ENCODE measurements at regions of chr14 and their contacts with region 1.

Region 1: DNA sequence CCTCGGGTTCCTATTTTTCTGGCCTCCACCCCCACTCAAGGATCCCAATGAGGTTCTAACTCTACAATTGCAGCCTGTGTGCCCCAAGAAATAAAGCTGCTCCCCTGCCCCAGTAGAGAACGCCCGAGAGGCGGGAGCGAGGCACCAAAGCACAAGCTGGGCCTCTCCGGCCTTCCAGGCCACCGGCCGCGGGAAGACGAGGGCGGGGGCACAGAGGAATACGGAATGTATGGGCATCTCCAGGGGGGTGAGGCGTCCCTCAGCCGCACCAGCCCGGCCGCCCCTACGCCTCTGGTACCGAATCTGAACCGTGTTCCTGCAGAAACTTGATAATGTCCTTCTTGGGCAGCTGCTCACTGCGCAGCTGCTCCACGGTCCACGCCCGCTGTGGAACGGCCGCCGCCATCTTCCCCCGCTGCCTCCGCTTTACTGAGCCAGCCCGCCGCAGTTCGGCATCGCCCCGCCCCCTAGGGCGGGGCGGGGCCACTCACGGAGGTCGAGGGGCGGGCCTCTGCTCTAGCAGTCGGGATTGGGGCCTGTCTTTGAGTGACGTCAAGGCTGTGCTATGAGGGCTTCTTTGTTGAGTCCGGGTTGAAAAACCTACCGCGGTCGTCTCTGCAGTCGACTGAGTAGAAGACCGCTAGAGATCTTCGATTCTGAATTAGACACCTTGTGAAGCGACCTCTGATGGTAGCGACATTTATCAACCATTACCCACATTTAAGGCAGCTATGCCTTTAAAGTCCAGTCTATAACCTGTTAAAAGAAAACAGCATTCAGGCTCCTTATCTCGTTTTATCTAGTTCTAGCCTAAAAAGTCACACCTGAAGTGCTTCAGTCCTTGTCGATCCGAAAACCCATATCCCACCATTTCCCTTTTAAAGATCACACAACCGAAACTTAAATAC is at the start of gene FKBP3:
- DNase-seq: peak; percentile 92 to 100 (median 98)

Region 2: DNA sequence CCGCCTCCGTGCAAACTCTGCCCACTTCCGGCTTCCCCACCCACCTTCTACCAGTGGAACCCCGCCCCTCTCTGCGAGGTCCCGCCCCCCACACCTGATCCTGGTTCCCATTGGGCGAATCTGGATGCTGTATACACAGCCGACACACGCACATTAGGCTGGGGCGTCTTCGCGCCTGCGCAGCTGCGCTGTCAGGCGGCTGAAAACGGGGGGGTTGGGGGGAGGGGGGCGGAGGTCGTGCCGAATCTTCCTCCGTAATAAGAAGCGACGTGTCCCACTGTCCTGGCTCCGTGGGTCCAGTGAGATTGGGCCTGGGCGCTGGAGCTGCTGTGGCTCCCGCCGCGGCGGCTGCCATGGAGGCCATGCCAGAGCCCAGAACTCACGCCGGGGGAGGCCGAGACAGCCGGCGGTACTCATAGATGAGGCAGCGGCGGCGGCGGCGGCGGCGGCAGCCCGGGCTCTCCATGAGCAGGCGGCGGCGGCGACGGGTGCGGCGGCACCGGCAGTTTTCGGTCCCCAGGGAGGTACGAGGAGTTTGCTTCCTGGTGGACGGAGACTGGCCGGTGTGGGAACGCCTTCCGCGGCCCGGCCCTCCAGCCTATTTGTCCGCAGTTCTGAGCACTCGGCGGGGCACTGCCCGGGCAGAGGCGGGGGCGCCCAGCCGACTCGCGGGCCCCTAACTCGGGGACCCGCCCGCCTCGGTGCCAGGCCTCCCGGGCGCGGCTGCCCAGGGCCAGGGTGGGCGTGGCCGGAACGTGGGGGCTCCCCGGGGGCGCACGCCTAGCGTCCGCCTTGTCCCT is 237.1 kb before region 1 on chr14:
- intact Hi-C with region 1: loop called (anchors 10 kb)
- DNase-seq: peak; percentile 95 to 99 (median 98)

Region 3: GRCh38 chr14:44961604-44962333 is 172.5 kb before region 1 on chr14 and contains the starts of genes KLHL28 and TOGARAM1:
- intact Hi-C with region 1: loop called (anchors 2 kb)
- DNase-seq: peak; percentile 95 to 100 (median 99)

Region 4: DNA sequence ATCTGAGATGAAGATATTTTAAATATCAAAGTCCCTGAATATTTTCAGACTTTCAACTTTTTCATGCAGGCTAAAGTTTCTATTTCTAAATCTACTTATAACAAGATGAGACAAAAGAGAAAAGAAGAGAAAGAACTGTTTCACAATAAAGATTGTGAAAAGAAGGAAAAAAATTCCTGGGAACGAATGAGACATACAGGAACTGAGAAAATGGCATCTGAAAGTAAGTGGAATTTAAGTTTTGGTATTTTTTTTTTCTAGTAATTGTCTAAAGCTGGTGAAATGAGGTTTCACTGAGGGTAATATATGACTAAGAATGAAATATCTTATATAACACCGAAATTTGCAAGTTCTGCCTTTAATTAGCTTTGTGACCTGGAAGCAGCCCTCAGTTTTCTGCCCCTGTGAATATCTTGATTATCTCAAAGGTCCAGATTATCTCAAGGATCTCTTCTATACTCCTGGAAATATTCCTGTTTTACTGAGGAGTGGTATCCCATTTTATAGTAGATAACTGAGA is 106.1 kb before region 1 on chr14:
- intact Hi-C with region 1: no loop called
- DNase-seq: no peak

Region 5: DNA sequence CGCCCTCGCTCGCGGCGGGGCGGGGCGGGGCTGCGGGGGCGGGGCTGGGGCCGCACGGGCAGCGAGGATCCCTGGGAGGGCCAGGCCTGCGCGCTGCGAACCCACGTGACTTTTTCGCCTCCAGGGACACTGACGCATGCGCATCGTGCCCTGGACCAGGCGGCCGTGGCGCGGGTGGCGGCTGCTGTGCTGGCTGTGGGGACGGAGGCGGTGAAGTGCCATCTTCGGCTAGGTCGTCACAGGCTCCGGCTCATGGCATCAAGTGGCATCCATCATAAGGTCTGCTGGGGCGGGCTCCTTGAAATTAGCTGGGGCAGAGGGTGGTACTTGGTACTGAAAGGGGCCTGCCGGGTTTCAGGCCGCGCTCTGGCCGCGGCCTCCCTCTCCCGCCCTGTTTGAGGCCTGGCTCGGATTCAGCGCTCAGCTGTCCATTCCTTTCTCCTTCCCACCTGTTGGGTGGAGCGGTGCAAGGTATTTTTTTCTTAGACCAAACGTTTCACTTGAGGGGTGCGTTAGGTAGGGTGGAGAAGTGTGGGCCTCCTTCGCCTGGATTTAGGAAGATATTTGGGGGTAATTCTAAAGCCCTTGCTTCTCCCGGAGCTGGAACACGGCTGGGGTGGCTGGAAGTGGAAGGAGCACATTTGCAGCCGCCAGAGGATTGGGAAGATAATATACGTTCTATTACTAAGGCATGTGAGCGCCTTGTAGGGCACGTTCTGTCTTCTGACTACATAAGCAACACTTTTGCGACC is 50.2 kb before region 1 on chr14 and contains the start of gene PRPF39:
- intact Hi-C with region 1: loop called (anchors 5 kb)
- DNase-seq: peak; percentile 84 to 98 (median 94)

Region 6: GRCh38 chr14:45253068-45253753 is 118.9 kb after region 1 on chr14 and contains the start of gene MIS18BP1:
- intact Hi-C with region 1: loop called (anchors 10 kb)
- DNase-seq: peak; percentile 82 to 97 (median 92)

Region 7: DNA sequence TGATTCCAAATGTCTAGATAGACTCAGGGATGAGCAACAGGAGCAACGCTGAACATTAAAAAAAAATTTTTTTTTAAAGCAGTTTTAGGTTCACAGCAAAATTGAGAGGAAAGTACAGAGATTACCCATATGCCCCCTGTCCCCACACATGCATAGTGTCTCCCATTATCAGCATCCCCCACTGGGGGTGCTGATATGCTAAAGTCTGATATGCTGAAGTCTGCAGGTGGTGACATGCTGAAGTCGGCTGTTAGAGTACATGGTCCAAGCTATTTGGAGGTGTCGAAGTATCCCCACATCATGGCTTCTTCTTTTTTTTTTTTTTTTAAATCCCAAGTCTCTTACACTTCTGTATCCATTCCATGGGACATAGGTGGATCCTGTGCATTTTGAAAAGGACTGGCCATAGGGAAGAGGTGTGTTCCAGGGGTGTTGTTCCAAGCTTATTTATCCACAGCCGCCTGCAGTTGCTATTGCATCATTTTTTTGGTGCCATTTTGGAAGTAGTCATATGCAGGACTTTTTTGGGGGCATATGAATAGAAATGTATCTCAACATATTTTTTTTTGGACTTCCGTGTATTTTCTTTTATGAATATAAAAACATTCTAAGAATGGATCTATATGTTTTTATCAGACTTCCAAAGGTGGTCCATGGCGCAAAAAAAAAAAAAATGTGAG is 137.7 kb after region 1 on chr14:
- intact Hi-C with region 1: no loop called
- DNase-seq: no peak

Measured in head of caudate nucleus (tissue), 42 donors.